Right cardiac atrium (tissue), 5 donors: ENCODE measurements at regions of chr12 and their contacts with region 1.

Region 1: DNA sequence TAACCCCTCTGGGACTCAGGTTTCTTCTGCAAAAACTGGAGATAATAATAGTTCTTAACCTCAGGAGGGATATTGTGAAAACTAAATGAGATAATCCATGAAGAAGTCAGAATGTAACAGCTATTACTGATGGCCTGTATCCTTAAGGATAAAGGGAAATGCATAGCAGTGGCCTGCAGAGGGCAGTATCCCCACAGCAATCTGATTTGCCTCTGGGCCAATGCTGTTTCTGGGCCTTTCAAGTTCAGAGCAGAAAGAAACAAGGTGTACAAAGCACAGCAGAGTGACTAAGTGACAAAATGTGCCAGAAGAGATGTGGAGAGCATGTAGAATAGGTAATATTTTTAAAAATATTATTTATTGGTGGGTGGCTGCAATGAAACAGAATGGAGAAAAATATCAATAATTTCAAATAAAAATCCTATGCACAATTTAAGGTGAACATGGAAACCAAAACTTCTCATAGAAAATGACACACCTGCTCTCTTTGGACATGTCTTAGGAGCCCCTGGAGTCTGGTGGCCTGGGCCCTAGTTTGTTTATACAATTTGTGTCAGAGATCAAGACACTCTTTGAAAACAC is 90.3 kb downstream of the C12orf75 start:
- DNase-seq: peak; percentile 74 to 84 (median 75)
- ATAC-seq: peak; percentile 87 to 93
- H3K4me3 ChIP-seq: no peak overlapping the region
- H3K27ac ChIP-seq: no peak overlapping the region
- H3K4me1 ChIP-seq: no peaks in the 10 kb centered on the region
- H3K27me3 ChIP-seq: no peaks in the 10 kb centered on the region

Region 2: GRCh38 chr12:105705765-105706164 is 285.0 kb after region 1 on chr12:
- intact Hi-C with region 1: loop called in 1 of 4 experiments (anchors 10 kb)
- DNase-seq: peak in 2 of 3 donors; percentile 26 to 32
- ATAC-seq: peak; percentile 41 to 67
- H3K4me3 ChIP-seq: no peak overlapping the region
- H3K27ac ChIP-seq: peak overlapping the region; percentile 20
- H3K4me1 ChIP-seq: peaks cover 5% of the 10 kb centered on the region
- H3K27me3 ChIP-seq: no peaks in the 10 kb centered on the region

Region 3: GRCh38 chr12:105759151-105759550 is 338.4 kb after region 1 on chr12:
- intact Hi-C with region 1: loop called in 1 of 4 experiments (anchors 10 kb)
- DNase-seq: no peak
- ATAC-seq: no peak
- H3K4me3 ChIP-seq: no peak overlapping the region
- H3K27ac ChIP-seq: no peak overlapping the region
- H3K4me1 ChIP-seq: no peaks in the 10 kb centered on the region
- H3K27me3 ChIP-seq: no peaks in the 10 kb centered on the region

Region 4: GRCh38 chr12:106205208-106206071 is 784.7 kb after region 1 on chr12:
- intact Hi-C with region 1: loop called in 1 of 4 experiments (anchors 10 kb)
- DNase-seq: peak; percentile 28 to 84 (median 79)
- ATAC-seq: peak; percentile 88 to 94
- H3K4me3 ChIP-seq: no peak overlapping the region
- H3K27ac ChIP-seq: no peak overlapping the region
- H3K4me1 ChIP-seq: no peaks in the 10 kb centered on the region
- H3K27me3 ChIP-seq: no peaks in the 10 kb centered on the region

Region 5: GRCh38 chr12:106223485-106224354 is 803.0 kb after region 1 on chr12:
- intact Hi-C with region 1: loop called in 3 of 4 experiments (anchors 5 to 10 kb)
- DNase-seq: peak; percentile 57 to 85 (median 80)
- ATAC-seq: peak; percentile 79 to 82
- H3K4me3 ChIP-seq: no peak overlapping the region
- H3K27ac ChIP-seq: no peak overlapping the region
- H3K4me1 ChIP-seq: no peaks in the 10 kb centered on the region
- H3K27me3 ChIP-seq: no peaks in the 10 kb centered on the region